Activated CD4-positive, alpha-beta T cell treated with anti-CD3 and anti-CD28 coated beads for 36 hours (primary cell): ENCODE measurements at regions of chr17 and their contacts with region 1.

Region 1: GRCh38 chr17:75405365-75406221 is at the start of gene GRB2:
- DNase-seq: peak; percentile 100
- ATAC-seq: peak; percentile 81
- H3K4me3 Mint-ChIP-seq: peak within 1 kb of the TSS; percentile 90
- H3K27ac Mint-ChIP-seq: peak within 1 kb of the TSS; percentile 96
- H3K4me1 Mint-ChIP-seq: peaks cover 35% of the 10 kb centered on the region
- H3K27me3 Mint-ChIP-seq: no peaks in the 10 kb centered on the region
- total RNA-seq, gene GRB2: 157 to 168 TPM

Region 2: GRCh38 chr17:75034236-75034908 is 371.2 kb before region 1 on chr17:
- CTCF ChIA-PET with region 1: no interaction called
- POLR2A ChIA-PET with region 1: no interaction called
- intact Hi-C with region 1: loop called in 1 of 2 experiments (anchors 1 kb)
- DNase-seq: peak; percentile 96
- ATAC-seq: peak; percentile 65
- H3K4me3 Mint-ChIP-seq: peak overlapping the region; percentile 91
- H3K27ac Mint-ChIP-seq: peak overlapping the region; percentile 96
- H3K4me1 Mint-ChIP-seq: peaks cover 49% of the 10 kb centered on the region
- H3K27me3 Mint-ChIP-seq: no peaks in the 10 kb centered on the region

Region 3: DNA sequence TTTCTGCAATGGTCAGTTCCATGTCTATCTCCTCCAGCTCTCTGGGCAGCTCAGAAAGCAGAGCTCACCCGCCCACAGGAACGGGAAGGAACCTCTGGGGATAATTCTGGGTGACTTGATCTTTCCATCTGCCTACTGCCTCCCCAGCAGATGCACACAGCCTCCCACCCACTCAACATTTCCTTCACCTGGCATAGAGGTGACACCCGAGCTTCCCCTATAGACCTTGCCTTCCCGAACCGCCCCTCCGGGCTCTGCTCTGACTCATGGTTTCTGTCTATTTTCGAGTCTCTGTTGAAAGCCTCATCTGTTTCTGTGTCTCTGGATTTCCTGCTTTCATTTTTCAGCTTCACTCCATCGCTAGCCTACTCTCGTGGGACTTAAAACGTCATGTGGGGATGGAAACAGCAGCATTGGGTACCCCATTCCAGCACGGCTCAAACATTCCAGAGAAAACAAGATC is 155.6 kb before region 1 on chr17:
- CTCF ChIA-PET with region 1: interaction called, 8 read pairs
- POLR2A ChIA-PET with region 1: interaction called, 4 read pairs
- intact Hi-C with region 1: loop called in 1 of 2 experiments (anchors 1 kb)
- DNase-seq: peak; percentile 90
- ATAC-seq: peak; percentile 97
- H3K4me3 Mint-ChIP-seq: peak overlapping the region; percentile 64
- H3K27ac Mint-ChIP-seq: peak overlapping the region; percentile 97
- H3K4me1 Mint-ChIP-seq: peaks cover 74% of the 10 kb centered on the region
- H3K27me3 Mint-ChIP-seq: no peaks in the 10 kb centered on the region

Region 4: DNA sequence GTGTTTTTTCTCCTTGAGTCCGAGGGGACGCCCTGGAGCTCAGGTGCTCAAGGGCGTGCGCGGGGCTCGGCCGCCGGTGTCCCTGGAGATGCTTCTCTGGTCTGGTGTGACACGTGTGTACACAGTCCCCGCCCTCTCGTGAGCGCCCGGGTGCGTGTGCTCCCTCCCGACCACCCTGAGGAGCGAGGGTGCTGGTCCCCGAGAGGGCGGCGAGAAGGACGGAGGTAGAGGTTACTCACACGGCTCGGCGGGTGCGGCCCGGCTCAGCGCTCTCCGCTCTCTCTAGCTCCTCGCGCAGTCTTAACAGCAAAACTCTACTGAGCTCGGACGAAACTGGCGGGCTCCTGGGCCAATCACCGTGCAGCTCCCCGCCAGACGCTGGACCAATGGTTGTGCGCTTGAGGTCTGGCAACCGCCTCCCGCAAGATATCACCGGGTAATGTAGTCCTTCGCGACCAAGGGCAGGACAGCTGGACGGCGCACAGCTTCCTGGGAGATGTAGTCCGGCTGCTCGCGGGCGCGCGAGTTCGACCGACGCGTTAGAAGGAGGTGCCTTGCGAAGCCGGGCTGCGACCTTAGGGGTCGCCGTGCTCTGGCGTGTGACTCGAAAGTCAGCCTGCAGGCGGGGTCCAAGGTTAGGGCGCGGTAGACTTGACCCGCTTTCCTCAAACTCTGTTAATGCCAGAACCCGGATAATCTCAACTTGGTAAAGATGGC is 116.3 kb before region 1 on chr17 and contains the start of gene SLC25A19:
- CTCF ChIA-PET with region 1: interaction called, 11 read pairs
- POLR2A ChIA-PET with region 1: interaction called, 11 read pairs
- intact Hi-C with region 1: loop called (anchors 1 kb)
- DNase-seq: peak; percentile 99
- ATAC-seq: peak; percentile 95
- H3K4me3 Mint-ChIP-seq: peak within 1 kb of the TSS; percentile 86
- H3K27ac Mint-ChIP-seq: peak within 1 kb of the TSS; percentile 100
- H3K4me1 Mint-ChIP-seq: peaks cover 28% of the 10 kb centered on the region
- H3K27me3 Mint-ChIP-seq: no peaks in the 10 kb centered on the region
- total RNA-seq, gene SLC25A19: 67.8 to 79.7 TPM

Region 5: GRCh38 chr17:75338335-75338734 is 67.3 kb before region 1 on chr17:
- CTCF ChIA-PET with region 1: interaction called, 5 read pairs
- POLR2A ChIA-PET with region 1: no interaction called
- intact Hi-C with region 1: loop called in 1 of 2 experiments (anchors 2 kb)
- DNase-seq: peak; percentile 38
- ATAC-seq: peak; percentile 33
- H3K4me3 Mint-ChIP-seq: peak overlapping the region; percentile 65
- H3K27ac Mint-ChIP-seq: peak overlapping the region; percentile 96
- H3K4me1 Mint-ChIP-seq: peaks cover 82% of the 10 kb centered on the region
- H3K27me3 Mint-ChIP-seq: no peaks in the 10 kb centered on the region

Region 6: GRCh38 chr17:75371339-75371738 is 34.3 kb before region 1 on chr17:
- CTCF ChIA-PET with region 1: no interaction called
- POLR2A ChIA-PET with region 1: no interaction called
- intact Hi-C with region 1: loop called (anchors 2 kb)
- DNase-seq: no peak
- ATAC-seq: peak; percentile 24
- H3K4me3 Mint-ChIP-seq: peak overlapping the region; percentile 56
- H3K27ac Mint-ChIP-seq: peak overlapping the region; percentile 82
- H3K4me1 Mint-ChIP-seq: peaks cover 78% of the 10 kb centered on the region
- H3K27me3 Mint-ChIP-seq: no peaks in the 10 kb centered on the region

Region 7: GRCh38 chr17:75524953-75525719 is 119.5 kb after region 1 on chr17 and contains the start of gene LLGL2:
- CTCF ChIA-PET with region 1: no interaction called
- POLR2A ChIA-PET with region 1: no interaction called
- intact Hi-C with region 1: loop called in 1 of 2 experiments (anchors 1 kb)
- DNase-seq: peak; percentile 88
- ATAC-seq: peak; percentile 89
- H3K4me3 Mint-ChIP-seq: peak within 1 kb of the TSS; percentile 62
- H3K27ac Mint-ChIP-seq: no peak within 1 kb of the TSS
- H3K4me1 Mint-ChIP-seq: peaks cover 10% of the 10 kb centered on the region
- H3K27me3 Mint-ChIP-seq: no peaks in the 10 kb centered on the region
- total RNA-seq, gene LLGL2: 7.1 to 9.6 TPM

Region 8: DNA sequence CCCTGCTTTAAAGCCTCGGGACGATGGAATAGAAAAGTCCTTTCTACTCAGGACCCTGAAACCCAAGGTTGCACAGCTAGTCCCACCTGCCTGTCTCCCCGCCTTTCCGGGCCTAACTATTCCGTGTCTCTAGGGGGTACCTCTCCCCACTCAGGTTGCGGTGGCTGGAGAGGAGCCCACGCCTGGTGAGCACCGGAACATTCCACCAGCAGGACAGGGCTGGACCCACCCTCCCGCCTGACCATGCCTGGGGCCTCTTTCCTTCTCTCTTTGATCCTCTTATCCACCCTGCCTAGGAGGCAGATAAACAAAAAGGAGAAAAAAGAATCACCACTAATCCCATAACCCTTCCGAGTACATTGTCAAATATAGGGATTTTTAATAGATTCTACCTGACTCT is 130.8 kb after region 1 on chr17:
- CTCF ChIA-PET with region 1: no interaction called
- POLR2A ChIA-PET with region 1: no interaction called
- intact Hi-C with region 1: no loop called
- DNase-seq: no peak
- ATAC-seq: no peak
- H3K4me3 Mint-ChIP-seq: no peak overlapping the region
- H3K27ac Mint-ChIP-seq: no peak overlapping the region
- H3K4me1 Mint-ChIP-seq: peaks cover 18% of the 10 kb centered on the region
- H3K27me3 Mint-ChIP-seq: no peaks in the 10 kb centered on the region